ENCODE measurements at regions of chr7 and their contacts with region 1.

Region 1: DNA sequence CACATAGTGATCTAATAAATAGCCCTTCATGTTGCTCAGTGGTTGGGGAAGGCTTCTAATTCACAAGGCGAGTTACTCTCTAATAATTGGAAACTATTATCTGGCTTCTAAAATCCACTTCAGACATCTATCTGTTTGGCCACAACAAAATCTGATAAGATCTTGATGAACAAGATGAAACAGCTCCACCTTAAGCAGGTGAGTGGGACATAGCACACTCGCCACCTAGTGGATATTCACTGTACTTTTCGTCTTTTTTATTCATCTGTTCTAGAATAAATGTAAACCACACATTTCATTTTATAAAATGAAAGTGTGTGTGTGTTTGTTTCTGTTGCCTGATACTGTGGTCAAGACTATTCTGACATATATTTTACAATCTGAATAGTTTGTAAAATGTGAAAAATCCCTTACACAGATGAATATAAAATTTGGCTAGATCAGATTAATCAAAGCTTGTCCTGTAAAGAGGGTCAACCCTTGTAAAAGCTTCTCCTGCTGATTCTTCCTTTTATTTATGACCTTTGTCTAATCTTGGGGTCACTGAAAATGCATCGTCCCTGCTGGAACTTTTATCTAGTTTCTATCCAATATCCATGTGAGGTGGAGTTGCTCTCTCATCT is 26.5 kb upstream of the CNTNAP2 start:
- DNase-seq: no peak

Region 2: DNA sequence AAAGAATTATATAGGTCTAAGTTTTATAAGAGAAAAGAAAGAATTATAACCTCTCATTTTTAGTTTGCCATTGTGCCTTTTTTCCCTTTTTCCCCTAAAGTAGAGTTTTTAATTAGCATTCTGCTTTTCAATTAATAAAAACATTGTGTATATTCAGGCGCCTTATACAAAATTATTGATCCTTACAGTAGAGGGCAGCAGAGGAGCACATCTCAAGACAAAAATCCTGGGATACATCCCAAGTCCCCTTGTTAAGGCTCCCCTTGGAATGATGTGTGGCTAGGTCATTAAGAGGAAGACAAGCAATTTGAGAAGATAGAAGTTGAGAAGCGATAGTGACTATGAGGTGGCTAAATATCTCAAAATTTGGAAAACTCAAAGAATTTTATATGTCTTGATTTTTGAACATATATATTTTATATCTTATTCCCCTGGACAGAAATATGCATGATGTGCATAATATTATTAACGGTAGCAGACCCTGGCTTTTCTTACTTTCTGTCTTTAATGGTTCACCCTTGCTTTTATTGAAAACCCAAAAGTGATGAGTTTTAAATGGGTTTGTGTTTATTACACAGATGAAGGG is 1235.2 kb before region 1 on chr7:
- intact Hi-C with region 1: loop called (anchors 5 kb)
- DNase-seq: no peak

Region 3: DNA sequence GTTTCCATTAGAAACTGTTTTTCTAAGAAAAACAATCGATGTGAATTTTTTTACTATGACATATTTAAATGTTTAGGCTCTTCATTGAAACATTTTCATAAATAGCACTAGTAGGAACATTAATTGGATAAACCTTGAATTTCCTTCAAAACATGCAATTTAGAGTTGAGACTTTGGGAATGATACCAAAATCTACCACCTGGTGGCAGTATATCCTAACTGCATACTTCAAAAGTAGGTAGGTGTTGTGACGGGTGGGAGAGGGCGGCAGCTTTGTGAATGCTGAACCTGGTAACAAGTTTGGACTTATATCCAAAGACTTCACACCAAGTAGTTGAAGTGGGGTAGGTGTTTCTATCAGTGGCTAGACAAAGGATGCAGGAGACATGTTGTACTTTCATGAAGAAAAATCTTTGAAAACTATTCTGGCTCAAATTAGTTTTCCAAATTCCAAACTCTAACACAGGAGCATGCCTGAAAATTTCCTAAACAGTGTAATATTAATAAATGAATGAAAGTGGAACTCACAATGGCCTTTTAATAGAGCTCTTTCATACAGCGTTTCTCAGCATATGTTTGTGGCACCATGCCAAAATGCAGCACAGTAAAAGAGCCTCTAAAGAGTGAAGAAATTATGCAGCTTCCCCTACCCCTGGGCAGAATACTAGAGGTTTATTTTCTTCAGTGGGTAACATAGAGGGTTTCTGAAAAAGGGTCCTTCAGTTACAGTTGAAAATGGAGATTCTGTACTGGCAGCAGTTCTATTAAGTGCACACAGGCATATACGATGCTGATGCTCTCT is 1053.3 kb before region 1 on chr7:
- intact Hi-C with region 1: loop called (anchors 2 kb)
- DNase-seq: peak in 6 of 10 donors; percentile 10 to 74 (median 30)

Region 4: DNA sequence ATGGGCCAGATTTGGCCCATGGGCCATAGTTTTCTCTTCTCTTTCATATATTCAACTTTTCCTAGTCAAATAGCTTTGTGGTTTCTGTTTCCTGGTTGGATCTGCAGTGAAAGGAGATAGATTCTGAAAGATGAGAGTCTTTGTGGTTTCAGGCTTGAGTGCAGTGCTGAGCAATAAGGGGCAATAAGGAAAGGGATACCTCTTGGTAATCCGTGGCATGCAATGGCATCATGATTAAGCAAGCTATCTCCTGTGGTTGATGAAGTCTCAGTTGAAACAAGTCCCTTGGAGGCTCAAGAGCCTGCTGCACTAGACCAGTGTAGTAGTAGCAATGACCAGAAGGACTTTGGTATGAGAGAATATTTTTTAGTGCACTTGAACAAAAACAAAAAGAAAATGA is 161.2 kb before region 1 on chr7:
- intact Hi-C with region 1: no loop called
- DNase-seq: no peak

Region 5: GRCh38 chr7:146397141-146397540 is 307.0 kb after region 1 on chr7:
- intact Hi-C with region 1: no loop called
- DNase-seq: no peak